ENCODE measurements at regions of chr11 and their contacts with region 1.

Region 1: GRCh38 chr11:10584071-10584501 is 15.6 kb upstream of the LYVE1 start:
- DNase-seq: peak in 1 of 2 donors; percentile 55
- H3K4me3 ChIP-seq: no peak overlapping the region
- H3K27ac ChIP-seq: peak overlapping the region; percentile 94
- H3K4me1 ChIP-seq: peaks cover 6 to 55% of the 10 kb centered on the region in 2 donors
- H3K27me3 ChIP-seq: no peaks in the 10 kb centered on the region
- CTCF ChIP-seq: no peak

Region 2: GRCh38 chr11:10572533-10572932 is 11.6 kb before region 1 on chr11:
- intact Hi-C with region 1: loop called (anchors 1 kb)
- DNase-seq: no peak
- H3K4me3 ChIP-seq: no peak overlapping the region
- H3K27ac ChIP-seq: peak overlapping the region; percentile 78 to 94
- H3K4me1 ChIP-seq: peaks cover 8 to 44% of the 10 kb centered on the region in 2 donors
- H3K27me3 ChIP-seq: no peaks in the 10 kb centered on the region
- CTCF ChIP-seq: no peak

Region 3: DNA sequence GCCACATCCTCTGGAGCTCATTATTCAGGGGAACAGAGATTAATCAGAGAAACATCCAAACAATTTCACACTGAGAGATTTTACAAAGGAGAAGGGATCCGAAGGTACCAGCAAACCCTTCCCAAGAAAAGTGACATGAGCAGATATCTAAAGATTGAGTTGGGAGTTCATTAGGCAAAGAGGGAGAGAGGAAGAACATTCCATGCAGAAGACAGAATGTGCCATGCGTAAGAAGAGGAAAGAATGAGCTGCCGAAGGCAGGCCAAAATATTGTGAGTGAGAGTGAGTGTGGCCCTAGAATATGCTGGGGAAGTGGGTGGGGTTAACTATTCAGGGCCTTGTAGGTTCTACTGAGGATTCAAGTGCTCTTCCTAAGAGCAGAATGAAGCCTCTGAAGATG is 34.4 kb after region 1 on chr11:
- intact Hi-C with region 1: loop called (anchors 2 kb)
- DNase-seq: peak in 1 of 2 donors; percentile 85
- H3K4me3 ChIP-seq: no peak overlapping the region
- H3K27ac ChIP-seq: peak overlapping the region; percentile 82 to 97
- H3K4me1 ChIP-seq: peaks cover 18 to 39% of the 10 kb centered on the region in 2 donors
- H3K27me3 ChIP-seq: no peaks in the 10 kb centered on the region
- CTCF ChIP-seq: no peak

Measured in ascending aorta (tissue), 2 donors.